ENCODE measurements at regions of chr19 and their contacts with region 1.

Region 1: DNA sequence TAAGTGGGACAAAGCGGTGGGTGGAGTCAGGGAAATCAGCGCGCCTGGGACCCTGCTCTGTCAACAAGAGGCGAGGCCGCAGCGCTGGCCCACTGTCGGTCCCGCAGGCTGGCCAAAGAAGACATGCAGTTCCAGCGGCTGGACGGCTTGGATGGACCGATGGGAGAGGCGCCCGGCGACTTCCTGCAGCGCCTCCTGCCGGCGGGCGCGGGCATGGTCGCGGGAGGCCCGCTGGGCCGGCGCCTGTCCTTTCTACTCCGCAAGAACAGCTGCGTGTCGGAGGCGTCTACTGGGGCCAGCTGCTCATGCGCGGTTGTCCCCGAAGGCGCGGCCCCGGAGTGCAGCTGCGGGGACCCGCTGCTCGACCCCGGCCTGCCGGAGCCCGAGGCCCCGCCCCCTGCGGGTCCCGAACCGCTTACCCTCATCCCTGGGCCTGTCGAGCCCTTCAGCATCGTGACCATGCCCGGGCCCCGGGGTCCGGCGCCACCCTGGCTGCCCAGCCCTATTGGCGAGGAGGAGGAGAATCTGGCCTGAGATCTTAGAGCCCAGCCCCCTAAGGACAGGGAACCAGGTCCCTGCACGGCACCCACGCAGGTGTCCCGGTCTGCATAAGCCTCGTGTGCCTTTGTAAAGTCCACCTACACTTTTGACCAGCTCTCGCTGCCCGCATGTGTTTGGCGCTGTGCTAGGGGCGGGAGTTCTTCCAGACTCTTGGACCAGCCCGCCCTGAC is 6.1 kb downstream of the BEST2 start:
- DNase-seq: peak; percentile 75
- ATAC-seq: peak; percentile 72
- H3K4me3 ChIP-seq: peak overlapping the region in 3 of 5 experiments; percentile 27 to 42 (median 37)
- H3K4me3 Mint-ChIP-seq: peak overlapping the region; percentile 52
- H3K27ac ChIP-seq: no peak overlapping the region
- H3K27ac Mint-ChIP-seq: no peak overlapping the region
- H3K4me1 ChIP-seq: peaks cover 7 to 8% of the 10 kb centered on the region in 2 donors
- H3K4me1 Mint-ChIP-seq: peaks cover 11% of the 10 kb centered on the region
- H3K27me3 ChIP-seq: peaks cover 0 to 28% (median 5%) of the 10 kb centered on the region in 4 experiments
- H3K27me3 Mint-ChIP-seq: peaks cover 23% of the 10 kb centered on the region
- CTCF ChIP-seq: peak; percentile 88

Region 2: DNA sequence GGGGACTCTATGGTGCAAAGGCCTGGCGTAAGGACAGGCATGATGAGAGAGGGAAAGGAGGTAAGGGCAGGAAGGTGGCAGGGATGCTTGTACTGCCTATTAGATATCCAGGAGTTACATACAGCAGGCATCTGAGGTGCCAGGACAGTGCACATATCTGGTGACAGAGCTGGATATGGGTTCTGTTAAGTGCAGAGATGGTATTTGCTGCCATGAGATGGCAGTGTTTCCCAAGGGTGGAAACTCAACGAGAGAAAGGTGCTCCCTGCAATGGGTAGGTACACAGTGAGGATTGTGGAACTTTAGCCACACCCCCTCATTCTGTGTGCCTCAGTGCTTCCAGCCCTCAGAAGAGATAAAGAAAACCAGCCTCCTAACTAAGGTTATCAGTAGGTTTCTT is 40.8 kb before region 1 on chr19:
- CTCF ChIA-PET with region 1: interaction called, 45 read pairs
- POLR2A ChIA-PET with region 1: no interaction called
- intact Hi-C with region 1: loop called (anchors 1 kb)
- DNase-seq: peak; percentile 67
- ATAC-seq: peak; percentile 72
- H3K4me3 ChIP-seq: no peak overlapping the region
- H3K4me3 Mint-ChIP-seq: no peak overlapping the region
- H3K27ac ChIP-seq: no peak overlapping the region
- H3K27ac Mint-ChIP-seq: no peak overlapping the region
- H3K4me1 ChIP-seq: peaks cover 15 to 17% of the 10 kb centered on the region in 2 donors
- H3K4me1 Mint-ChIP-seq: peaks cover 18% of the 10 kb centered on the region
- H3K27me3 ChIP-seq: no peaks in the 10 kb centered on the region
- H3K27me3 Mint-ChIP-seq: no peaks in the 10 kb centered on the region
- CTCF ChIP-seq: peak; percentile 61

Region 3: DNA sequence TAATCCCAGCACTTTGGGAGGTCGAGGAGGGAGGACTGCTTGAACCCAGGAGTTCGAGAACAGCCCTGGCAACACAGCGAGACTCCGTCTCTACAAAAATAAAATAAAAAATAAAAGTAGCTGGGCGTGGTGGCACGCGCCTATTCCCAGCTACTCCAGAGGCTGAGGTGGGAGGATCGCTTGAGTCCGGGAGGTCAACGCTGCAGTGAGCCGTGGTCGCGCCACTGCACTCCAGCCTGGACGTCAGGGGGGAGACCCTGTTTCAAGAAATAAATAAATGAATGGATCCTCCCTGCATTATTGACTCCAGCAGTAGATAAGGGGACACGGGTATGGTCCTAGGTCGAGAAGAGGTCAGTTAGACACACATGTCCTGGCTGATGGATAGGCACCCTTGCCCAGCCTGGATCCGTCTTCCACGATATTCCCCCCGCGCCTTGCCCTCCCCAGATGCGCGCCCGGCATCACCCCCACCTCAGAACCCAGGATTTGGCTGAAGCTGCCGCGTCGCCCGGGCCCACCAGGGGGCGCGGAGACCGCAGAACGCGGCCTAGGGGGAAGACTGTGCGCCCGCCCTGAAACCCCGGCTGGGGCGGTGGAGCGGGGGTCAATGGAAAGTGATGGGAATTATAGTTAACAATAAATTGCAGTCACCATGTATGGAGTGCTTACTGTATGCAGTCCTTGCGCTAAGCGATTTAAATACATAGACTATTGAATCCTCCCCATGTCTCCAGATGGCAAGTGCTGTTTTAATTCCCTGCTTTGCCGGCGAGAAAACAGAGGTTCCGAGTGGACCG is 19.7 kb after region 1 on chr19:
- CTCF ChIA-PET with region 1: interaction called, 22 read pairs
- POLR2A ChIA-PET with region 1: interaction called, 7 read pairs
- intact Hi-C with region 1: no loop called
- DNase-seq: peak; percentile 90
- ATAC-seq: peak; percentile 29
- H3K4me3 ChIP-seq: peak overlapping the region; percentile 63 to 89 (median 75)
- H3K4me3 Mint-ChIP-seq: peak overlapping the region; percentile 88
- H3K27ac ChIP-seq: peak overlapping the region; percentile 83 to 86
- H3K27ac Mint-ChIP-seq: peak overlapping the region; percentile 84
- H3K4me1 ChIP-seq: peaks cover 27 to 47% of the 10 kb centered on the region in 2 donors
- H3K4me1 Mint-ChIP-seq: peaks cover 48% of the 10 kb centered on the region
- H3K27me3 ChIP-seq: no peaks in the 10 kb centered on the region
- H3K27me3 Mint-ChIP-seq: no peaks in the 10 kb centered on the region
- CTCF ChIP-seq: peak; percentile 99

Region 4: DNA sequence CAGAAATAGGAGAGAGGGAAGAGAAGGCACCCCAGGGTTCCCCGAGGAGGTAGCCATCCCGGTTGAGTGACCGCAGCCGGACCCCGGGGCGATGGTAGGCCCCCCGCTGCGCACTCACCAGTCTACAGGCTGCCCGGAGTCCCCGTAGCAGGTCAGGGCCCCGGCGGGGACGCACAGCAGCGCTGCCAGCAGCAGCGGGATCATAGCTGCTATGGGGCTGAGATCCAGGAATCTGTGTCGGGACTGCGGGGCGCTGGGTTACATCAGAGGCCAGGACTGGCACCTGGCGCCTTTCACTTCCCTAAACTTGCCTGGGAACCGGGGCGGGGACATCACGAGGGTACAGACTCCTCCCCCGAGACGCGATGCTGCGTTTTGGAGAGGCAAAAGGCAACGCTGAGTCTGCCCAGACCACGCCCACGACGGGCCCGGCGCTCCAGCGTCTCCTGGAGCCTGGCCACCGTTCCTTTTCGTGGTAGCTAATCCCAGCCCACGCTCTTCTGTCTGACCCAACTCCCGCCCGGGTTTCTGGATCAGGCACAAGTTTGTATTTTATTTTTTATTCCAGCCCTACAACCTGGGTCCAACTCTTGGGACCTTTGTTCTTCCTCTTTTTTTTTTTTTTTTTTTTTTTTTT is 123.6 kb after region 1 on chr19 and contains the start of gene DNASE2:
- CTCF ChIA-PET with region 1: interaction called, 5 read pairs
- POLR2A ChIA-PET with region 1: interaction called, 13 read pairs
- intact Hi-C with region 1: no loop called
- DNase-seq: peak; percentile 98
- ATAC-seq: peak; percentile 88
- H3K4me3 ChIP-seq: peak within 1 kb of the TSS; percentile 58 to 97 (median 83)
- H3K4me3 Mint-ChIP-seq: peak within 1 kb of the TSS; percentile 84
- H3K27ac ChIP-seq: peak within 1 kb of the TSS; percentile 94 to 98
- H3K27ac Mint-ChIP-seq: peak within 1 kb of the TSS; percentile 96
- H3K4me1 ChIP-seq: peaks cover 19 to 41% of the 10 kb centered on the region in 2 donors
- H3K4me1 Mint-ChIP-seq: peaks cover 27% of the 10 kb centered on the region
- H3K27me3 ChIP-seq: no peaks in the 10 kb centered on the region
- H3K27me3 Mint-ChIP-seq: no peaks in the 10 kb centered on the region
- CTCF ChIP-seq: no peak
- total RNA-seq, gene DNASE2: 26.6 and 30.8 TPM in 2 replicates